ENCODE measurements at regions of chr11 and their contacts with region 1.

Region 1: DNA sequence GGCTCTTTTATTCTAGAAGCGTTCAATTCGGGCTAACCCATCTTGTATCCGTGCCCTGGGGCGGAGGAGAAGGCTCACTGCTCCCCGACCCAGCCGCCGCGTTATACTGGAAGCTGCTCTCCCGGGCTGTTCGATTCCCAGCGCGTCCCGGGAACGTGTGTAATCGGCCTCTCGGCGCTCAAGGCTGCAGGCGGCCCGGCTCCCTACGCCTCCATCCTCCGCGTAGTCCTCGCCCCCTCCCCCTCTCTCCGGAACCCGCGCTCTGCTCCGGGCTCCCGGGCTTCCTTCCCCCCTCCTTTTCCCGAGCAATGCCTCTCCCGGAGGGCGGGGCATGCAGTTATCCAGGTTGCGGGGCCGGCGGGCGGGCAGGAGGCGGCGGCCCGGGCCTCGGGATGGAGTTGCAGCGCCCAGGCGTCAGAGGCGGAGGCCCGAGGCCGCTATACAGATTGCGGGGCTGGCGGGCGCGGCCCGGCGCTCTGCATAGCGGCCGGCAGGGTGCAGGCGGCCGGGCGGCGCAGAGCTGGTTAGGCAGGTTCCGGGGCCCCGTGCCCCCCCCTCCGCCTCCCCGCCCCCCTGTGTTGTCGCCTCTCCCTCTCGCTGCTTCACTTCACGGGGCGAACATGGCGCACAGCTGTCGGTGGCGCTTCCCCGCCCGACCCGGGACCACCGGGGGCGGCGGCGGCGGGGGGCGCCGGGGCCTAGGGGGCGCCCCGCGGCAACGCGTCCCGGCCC is at the start of gene KMT2A:
- DNase-seq: peak; percentile 86 to 99 (median 96)
- ATAC-seq: peak; percentile 44 to 64
- H3K4me3 Mint-ChIP-seq: peak within 1 kb of the TSS; percentile 91 to 99 (median 95)
- H3K27ac Mint-ChIP-seq: peak within 1 kb of the TSS; percentile 89 to 99 (median 98)
- H3K4me1 Mint-ChIP-seq: peaks cover 28 to 54% (median 36%) of the 10 kb centered on the region in 4 donors
- H3K27me3 Mint-ChIP-seq: no peaks in the 10 kb centered on the region
- polyA plus RNA-seq, gene KMT2A: 16.9 to 30.5 (median 19.5) TPM

Region 2: GRCh38 chr11:118263695-118264567 is 172.1 kb before region 1 on chr11 and contains the start of gene MPZL2:
- POLR2A ChIA-PET with region 1: no interaction called
- DNase-seq: peak in 5 of 10 donors; percentile 21 to 46 (median 33)
- ATAC-seq: peak; percentile 67 to 73
- H3K4me3 Mint-ChIP-seq: peak within 1 kb of the TSS; percentile 85 to 92 (median 88)
- H3K27ac Mint-ChIP-seq: peak within 1 kb of the TSS; percentile 62 to 95 (median 86)
- H3K4me1 Mint-ChIP-seq: peaks cover 26 to 60% (median 53%) of the 10 kb centered on the region in 4 donors
- H3K27me3 Mint-ChIP-seq: peaks cover 0 to 6% (median 0%) of the 10 kb centered on the region in 5 donors
- polyA plus RNA-seq, gene MPZL2: 0.94 to 3.1 (median 1.2) TPM

Region 3: DNA sequence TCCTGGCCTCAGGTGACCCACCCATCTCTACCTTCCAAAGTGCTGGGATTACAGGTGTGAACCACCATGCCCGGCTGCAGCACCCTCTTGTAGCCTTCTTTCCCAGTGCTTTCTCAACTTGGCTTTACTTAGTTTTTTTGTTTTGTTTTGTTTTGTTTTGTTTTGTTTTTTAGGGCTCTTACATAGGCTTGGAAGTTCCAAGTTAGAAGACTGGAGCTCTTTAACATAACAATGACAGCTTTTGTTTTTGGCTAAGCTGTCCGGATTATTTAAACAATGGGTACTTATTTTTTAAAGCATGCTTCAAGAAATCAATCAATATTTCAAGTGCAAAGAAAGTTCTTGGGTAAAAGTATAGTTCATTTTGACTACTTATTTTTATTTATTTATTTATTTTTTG is 26.1 kb after region 1 on chr11:
- POLR2A ChIA-PET with region 1: interaction called, 10 read pairs
- DNase-seq: no peak
- ATAC-seq: no peak
- H3K4me3 Mint-ChIP-seq: no peak overlapping the region
- H3K27ac Mint-ChIP-seq: peak overlapping the region in 2 of 10 donors; percentile 33 to 51
- H3K4me1 Mint-ChIP-seq: peaks cover 18 to 57% (median 42%) of the 10 kb centered on the region in 4 donors
- H3K27me3 Mint-ChIP-seq: no peaks in the 10 kb centered on the region

Region 4: DNA sequence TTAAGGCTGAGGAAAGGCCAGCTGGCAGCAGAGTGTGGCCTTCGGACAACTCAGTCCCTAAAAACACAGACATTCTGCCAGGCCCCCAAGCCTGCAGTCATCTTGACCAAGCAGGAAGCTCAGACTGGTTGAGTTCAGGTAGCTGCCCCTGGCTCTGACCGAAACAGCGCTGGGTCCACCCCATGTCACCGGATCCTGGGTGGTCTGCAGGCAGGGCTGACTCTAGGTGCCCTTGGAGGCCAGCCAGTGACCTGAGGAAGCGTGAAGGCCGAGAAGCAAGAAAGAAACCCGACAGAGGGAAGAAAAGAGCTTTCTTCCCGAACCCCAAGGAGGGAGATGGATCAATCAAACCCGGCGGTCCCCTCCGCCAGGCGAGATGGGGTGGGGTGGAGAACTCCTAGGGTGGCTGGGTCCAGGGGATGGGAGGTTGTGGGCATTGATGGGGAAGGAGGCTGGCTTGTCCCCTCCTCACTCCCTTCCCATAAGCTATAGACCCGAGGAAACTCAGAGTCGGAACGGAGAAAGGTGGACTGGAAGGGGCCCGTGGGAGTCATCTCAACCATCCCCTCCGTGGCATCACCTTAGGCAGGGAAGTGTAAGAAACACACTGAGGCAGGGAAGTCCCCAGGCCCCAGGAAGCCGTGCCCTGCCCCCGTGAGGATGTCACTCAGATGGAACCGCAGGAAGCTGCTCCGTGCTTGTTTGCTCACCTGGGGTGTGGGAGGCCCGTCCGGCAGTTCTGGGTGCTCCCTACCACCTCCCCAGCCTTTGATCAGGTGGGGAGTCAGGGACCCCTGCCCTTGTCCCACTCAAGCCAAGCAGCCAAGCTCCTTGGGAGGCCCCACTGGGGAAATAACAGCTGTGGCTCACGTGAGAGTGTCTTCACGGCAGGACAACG is 459.3 kb after region 1 on chr11:
- POLR2A ChIA-PET with region 1: no interaction called
- DNase-seq: peak; percentile 63 to 88 (median 80)
- ATAC-seq: peak; percentile 72 to 85
- H3K4me3 Mint-ChIP-seq: peak overlapping the region; percentile 61 to 91 (median 78)
- H3K27ac Mint-ChIP-seq: peak overlapping the region; percentile 92 to 99 (median 98)
- H3K4me1 Mint-ChIP-seq: peaks cover 44 to 88% (median 84%) of the 10 kb centered on the region in 4 donors
- H3K27me3 Mint-ChIP-seq: no peaks in the 10 kb centered on the region